ENCODE measurements at regions of chr18 and their contacts with region 1.

Region 1: GRCh38 chr18:21612125-21612991 is at the start of gene SNRPD1:
- DNase-seq: peak; percentile 58
- H3K4me3 ChIP-seq: peak within 1 kb of the TSS; percentile 73
- H3K27me3 ChIP-seq: no peaks in the 10 kb centered on the region
- CTCF ChIP-seq: peak; percentile 99
- polyA plus RNA-seq, gene SNRPD1: 5.8 and 37.9 TPM in 2 replicates

Region 2: GRCh38 chr18:21600526-21601410 is 11.6 kb before region 1 on chr18 and contains the start of gene ESCO1:
- CTCF ChIA-PET with region 1: interaction called, 59 read pairs
- POLR2A ChIA-PET with region 1: no interaction called
- DNase-seq: peak; percentile 90
- H3K4me3 ChIP-seq: peak within 1 kb of the TSS; percentile 94
- H3K27me3 ChIP-seq: no peaks in the 10 kb centered on the region
- CTCF ChIP-seq: peak; percentile 84
- polyA plus RNA-seq, gene ESCO1: 2.0 and 5.0 TPM in 2 replicates

Measured in BJ (cell line).